ENCODE measurements at regions of chr3 and their contacts with region 1.

Region 1: GRCh38 chr3:126267226-126267975 is 87.0 kb upstream of the ALDH1L1 start:
- DNase-seq: peak; percentile 32 to 96
- H3K4me3 ChIP-seq: peak overlapping the region; percentile 34 to 50
- H3K27ac ChIP-seq: peak overlapping the region; percentile 92 to 99
- H3K4me1 ChIP-seq: peaks cover 20 to 56% of the 10 kb centered on the region in 2 donors
- H3K27me3 ChIP-seq: no peaks in the 10 kb centered on the region
- CTCF ChIP-seq: peak in 2 of 3 experiments; percentile 31 to 38

Region 2: DNA sequence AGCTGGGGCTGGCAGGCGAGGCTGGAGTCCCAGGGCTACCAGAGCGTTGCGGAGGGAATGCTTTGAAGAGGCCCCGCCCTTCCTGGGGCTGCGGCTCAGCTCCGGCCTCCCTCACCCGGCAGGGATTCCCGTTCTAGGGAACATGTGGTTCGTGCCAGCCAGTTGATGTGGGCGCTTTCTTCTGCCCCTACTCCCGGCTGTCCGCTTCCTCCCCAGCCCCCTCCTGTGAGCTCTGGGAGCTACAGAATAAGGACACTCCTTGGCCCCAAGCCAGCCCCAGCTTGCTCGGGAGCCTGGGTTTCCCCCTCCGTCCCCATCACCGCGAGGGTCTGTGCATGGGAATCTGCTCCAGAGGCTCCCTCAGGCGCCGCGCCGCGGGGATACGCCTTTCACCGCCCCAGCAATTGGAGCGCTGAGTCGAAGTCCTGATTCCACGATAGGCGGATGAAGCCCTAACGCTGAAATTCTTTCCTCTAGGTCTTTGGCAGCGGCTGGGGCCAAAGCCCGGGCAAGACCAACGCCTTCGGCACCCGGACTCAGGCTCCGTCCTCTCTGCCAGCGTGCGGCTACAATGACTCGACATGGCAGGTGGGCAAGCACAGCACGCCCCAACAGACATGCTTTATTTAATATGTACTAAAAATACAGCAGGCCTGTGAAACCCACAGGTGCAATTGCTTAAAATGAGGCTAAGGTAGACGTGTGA is 20.3 kb after region 1 on chr3:
- intact Hi-C with region 1: loop called (anchors 1 kb)
- DNase-seq: peak in 1 of 2 donors; percentile 88
- H3K4me3 ChIP-seq: peak overlapping the region; percentile 42 to 65
- H3K27ac ChIP-seq: peak overlapping the region; percentile 87 to 93
- H3K4me1 ChIP-seq: peaks cover 0 to 20% of the 10 kb centered on the region in 2 donors
- H3K27me3 ChIP-seq: no peaks in the 10 kb centered on the region
- CTCF ChIP-seq: peak in 1 of 3 experiments; percentile 7

Region 3: DNA sequence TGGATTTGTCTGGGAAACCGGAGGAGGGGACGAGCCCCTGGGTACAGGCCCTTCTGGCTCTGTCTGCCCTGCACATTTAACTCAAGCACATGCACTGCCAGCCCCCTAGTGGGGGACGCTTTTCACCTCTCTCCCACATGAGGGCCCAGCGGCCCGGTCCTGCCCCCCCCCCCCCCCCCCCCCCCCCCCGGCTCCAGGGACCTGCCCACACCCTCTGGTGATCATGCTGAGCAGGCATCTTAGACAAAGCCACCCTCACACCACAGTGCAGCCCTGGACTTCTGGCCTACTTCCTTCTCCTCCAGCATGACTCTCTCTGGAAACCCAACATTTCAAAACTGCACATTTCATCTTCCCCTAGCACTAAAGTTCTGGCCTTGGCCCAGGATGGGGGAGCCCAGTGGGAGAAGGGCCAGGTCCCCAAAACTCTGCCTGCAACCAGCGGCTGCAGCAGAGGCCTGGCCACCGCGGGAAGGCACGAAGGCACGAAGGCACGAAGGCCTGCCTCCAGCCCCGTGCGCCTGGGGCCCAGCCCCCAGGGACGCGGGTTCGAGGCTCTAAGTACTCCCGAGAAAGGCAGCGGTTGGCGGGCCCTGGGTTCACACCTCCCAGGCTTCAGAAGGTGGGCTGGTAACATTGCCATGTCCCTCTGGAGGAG is 75.7 kb after region 1 on chr3:
- intact Hi-C with region 1: loop called (anchors 2 kb)
- DNase-seq: peak in 1 of 2 donors; percentile 55
- H3K4me3 ChIP-seq: no peak overlapping the region
- H3K27ac ChIP-seq: peak overlapping the region; percentile 32 to 51
- H3K4me1 ChIP-seq: peaks cover 4 to 30% of the 10 kb centered on the region in 2 donors
- H3K27me3 ChIP-seq: no peaks in the 10 kb centered on the region
- CTCF ChIP-seq: no peak

Region 4: GRCh38 chr3:126456766-126457388 is 189.5 kb after region 1 on chr3:
- intact Hi-C with region 1: no loop called
- DNase-seq: no peak
- H3K4me3 ChIP-seq: no peak overlapping the region
- H3K27ac ChIP-seq: no peak overlapping the region
- H3K4me1 ChIP-seq: no peaks in the 10 kb centered on the region
- H3K27me3 ChIP-seq: no peaks in the 10 kb centered on the region
- CTCF ChIP-seq: no peak